ENCODE measurements at regions of chr12 and their contacts with region 1.

Region 1: DNA sequence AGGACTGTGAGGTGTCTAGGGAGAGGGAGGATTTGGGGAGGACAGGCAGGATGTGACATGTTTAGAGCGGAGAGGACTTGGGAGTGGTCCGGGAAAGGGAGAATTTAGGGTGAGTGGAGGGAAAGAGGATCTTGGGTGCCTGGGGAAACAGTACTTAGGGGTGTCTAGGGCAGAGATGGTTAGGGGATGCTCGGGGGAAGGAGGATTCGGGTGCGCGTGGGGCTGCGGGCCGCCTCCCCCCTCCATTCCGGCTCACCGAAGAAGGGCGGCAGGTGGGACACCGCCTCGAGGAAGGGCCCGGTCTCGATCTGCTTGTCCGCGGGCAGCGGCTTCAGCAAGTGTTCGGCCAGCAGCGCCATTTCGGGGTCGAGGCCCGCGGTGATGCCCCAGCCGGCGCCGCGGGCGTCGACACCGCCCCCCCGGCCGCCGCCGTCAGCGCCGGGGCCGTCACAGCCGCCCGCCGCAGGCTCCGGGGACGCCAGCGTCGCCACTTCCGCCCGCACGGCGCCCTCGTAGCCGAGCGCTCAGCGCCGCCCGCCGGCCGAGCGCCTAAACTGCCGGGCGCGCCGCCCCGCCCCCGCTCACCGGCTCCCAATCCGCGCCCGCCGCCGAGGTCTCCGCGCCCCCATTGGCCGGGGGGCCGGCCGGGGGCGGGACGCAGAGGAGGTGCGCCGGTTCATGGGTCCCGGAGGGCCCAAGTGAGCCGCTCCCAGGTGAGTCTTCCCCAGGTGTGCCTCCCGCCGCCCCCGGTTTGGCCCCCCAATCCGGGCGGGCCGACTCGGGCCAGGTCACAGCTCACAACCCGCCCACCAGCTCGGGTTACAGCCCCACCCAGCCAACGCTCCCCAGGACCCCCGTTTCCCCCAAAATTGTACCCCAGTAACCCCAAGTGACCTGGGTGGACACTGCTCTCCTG is at the start of gene GLTP:
- DNase-seq: peak; percentile 77 to 89
- H3K4me3 ChIP-seq: peak within 1 kb of the TSS; percentile 63 to 92
- H3K27ac ChIP-seq: peak within 1 kb of the TSS; percentile 72 to 85
- H3K4me1 ChIP-seq: peaks cover 0 to 42% (median 20%) of the 10 kb centered on the region in 4 donors
- H3K27me3 ChIP-seq: no peaks in the 10 kb centered on the region
- CTCF ChIP-seq: peak; percentile 38 to 92

Region 2: GRCh38 chr12:109597795-109598427 is 282.4 kb before region 1 on chr12:
- intact Hi-C with region 1: loop called (anchors 10 kb)
- DNase-seq: peak; percentile 78 to 88
- H3K4me3 ChIP-seq: peak overlapping the region in 1 of 2 donors; percentile 17
- H3K27ac ChIP-seq: no peak overlapping the region
- H3K4me1 ChIP-seq: peaks cover 0 to 12% (median 6%) of the 10 kb centered on the region in 4 donors
- H3K27me3 ChIP-seq: peaks cover 0 to 9% of the 10 kb centered on the region in 2 donors
- CTCF ChIP-seq: peak; percentile 93 to 94

Region 3: DNA sequence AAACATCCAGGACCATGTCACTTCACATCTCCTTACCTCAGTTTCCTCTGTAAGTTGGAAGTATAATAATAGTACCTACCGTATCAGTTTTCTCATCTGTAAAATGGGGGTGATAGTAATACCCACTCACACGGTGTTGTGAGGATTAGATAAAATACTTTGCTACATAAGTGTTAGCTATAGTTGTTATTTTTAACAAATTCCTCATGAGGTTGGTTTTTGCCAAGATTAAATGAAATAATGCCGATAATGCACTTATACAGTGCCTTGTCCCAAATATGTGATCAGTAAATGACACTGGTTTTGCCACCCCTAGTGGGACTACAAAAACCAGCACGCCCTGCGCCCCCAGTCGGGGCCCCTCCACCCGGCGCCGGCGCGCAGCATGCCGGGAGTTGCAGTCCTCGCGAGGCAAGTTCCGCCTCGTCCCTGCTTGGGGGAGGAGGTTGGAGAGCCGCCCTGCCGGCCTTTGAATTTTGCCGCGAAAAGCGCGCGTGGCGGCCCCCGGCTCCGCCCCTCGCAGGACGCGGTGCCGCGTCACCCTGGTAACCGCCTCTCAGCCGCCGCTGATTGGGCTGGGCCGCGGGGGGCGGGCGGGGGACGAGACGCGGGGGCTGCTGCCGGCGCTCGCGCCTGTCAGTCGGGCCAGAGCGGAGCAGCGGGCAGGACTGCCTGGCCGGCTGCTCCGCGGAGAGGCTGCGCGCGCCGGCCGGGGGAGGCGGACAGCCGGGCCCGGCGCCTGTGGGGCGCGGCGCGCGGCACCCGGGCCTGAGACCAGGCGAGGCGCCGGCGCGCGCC is 166.9 kb before region 1 on chr12 and contains the start of gene FAM222A:
- intact Hi-C with region 1: loop called (anchors 5 kb)
- DNase-seq: peak; percentile 93 to 98
- H3K4me3 ChIP-seq: peak within 1 kb of the TSS; percentile 61 to 83
- H3K27ac ChIP-seq: peak within 1 kb of the TSS in 1 of 2 donors; percentile 17
- H3K4me1 ChIP-seq: peaks cover 0 to 27% (median 20%) of the 10 kb centered on the region in 4 donors
- H3K27me3 ChIP-seq: peaks cover 5 to 84% of the 10 kb centered on the region in 2 donors
- CTCF ChIP-seq: peak in 1 of 2 experiments; percentile 33

Region 4: GRCh38 chr12:109811624-109811995 is 68.7 kb before region 1 on chr12:
- intact Hi-C with region 1: loop called (anchors 2 kb)
- DNase-seq: no peak
- H3K4me3 ChIP-seq: no peak overlapping the region
- H3K27ac ChIP-seq: no peak overlapping the region
- H3K4me1 ChIP-seq: no peaks in the 10 kb centered on the region
- H3K27me3 ChIP-seq: peaks cover 0 to 33% of the 10 kb centered on the region in 2 donors
- CTCF ChIP-seq: no peak

Measured in tibial artery (tissue), 4 donors.